GM23248 (cell line): ENCODE measurements at regions of chrX and their contacts with region 1.

Region 1: GRCh38 chrX:77597090-77597489 is 149.9 kb downstream of the FGF16 start:
- DNase-seq: peak; percentile 66
- H3K4me3 ChIP-seq: no peak overlapping the region
- H3K27ac ChIP-seq: no peak overlapping the region
- H3K4me1 ChIP-seq: peaks cover 3% of the 10 kb centered on the region
- H3K27me3 ChIP-seq: no peaks in the 10 kb centered on the region

Region 2: GRCh38 chrX:76427560-76428242 is 1169.4 kb before region 1 on chrX and contains the start of gene MAGEE1:
- in situ Hi-C with region 1: loop called (anchors 25 kb)
- DNase-seq: peak; percentile 74
- H3K4me3 ChIP-seq: peak within 1 kb of the TSS; percentile 81
- H3K27ac ChIP-seq: no peak within 1 kb of the TSS
- H3K4me1 ChIP-seq: no peaks in the 10 kb centered on the region
- H3K27me3 ChIP-seq: no peaks in the 10 kb centered on the region
- total RNA-seq, gene MAGEE1: 0.86 and 1.1 TPM in 2 replicates

Region 3: DNA sequence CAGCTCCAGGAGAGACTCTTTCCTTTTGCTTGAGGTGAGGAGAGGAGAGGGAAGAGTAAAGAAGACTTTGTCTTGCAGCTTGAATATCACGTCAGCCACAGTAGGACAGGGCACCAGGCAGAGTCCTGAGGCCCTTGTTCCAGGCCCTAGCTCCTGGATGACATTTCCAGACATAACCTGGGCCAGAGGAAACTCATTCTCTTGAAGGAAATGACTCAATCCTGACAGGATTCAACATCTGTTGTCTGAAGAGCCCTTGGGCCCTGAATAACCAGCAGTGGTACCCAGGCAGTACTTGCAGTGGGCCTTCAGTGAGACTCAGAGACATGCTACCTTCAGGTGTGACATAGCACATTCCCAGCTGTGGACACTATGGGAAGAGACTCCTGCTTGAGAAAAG is 87.1 kb before region 1 on chrX:
- in situ Hi-C with region 1: no loop called
- DNase-seq: peak; percentile 5
- H3K4me3 ChIP-seq: no peak overlapping the region
- H3K27ac ChIP-seq: no peak overlapping the region
- H3K4me1 ChIP-seq: peaks cover 8% of the 10 kb centered on the region
- H3K27me3 ChIP-seq: no peaks in the 10 kb centered on the region

Region 4: GRCh38 chrX:77693594-77693993 is 96.5 kb after region 1 on chrX:
- in situ Hi-C with region 1: loop called (anchors 25 kb)
- DNase-seq: no peak
- H3K4me3 ChIP-seq: no peak overlapping the region
- H3K27ac ChIP-seq: no peak overlapping the region
- H3K4me1 ChIP-seq: no peaks in the 10 kb centered on the region
- H3K27me3 ChIP-seq: no peaks in the 10 kb centered on the region